H1 (cell line): ENCODE measurements at regions of chr6 and their contacts with region 1.

Region 1: GRCh38 chr6:44662461-44663121 is 275.1 kb downstream of the CDC5L start:
- DNase-seq: peak; percentile 64 to 85
- H3K4me3 ChIP-seq: no peak overlapping the region
- H3K27ac ChIP-seq: peak overlapping the region; percentile 63; the same call in 1 of the 2 replicates
- H3K4me1 ChIP-seq: peaks cover 9 to 30% (median 24%) of the 10 kb centered on the region in 4 experiments
- H3K27me3 ChIP-seq: no peaks in the 10 kb centered on the region; a peak in 2 of 7 replicates
- CTCF ChIP-seq: no peak
- EP300 ChIP-seq: peak in 1 of 2 experiments; percentile 92; a peak in 1 of 3 replicates
- POLR2A ChIP-seq: no peak
- RAD21 ChIP-seq: peak; percentile 15 to 27

Region 2: DNA sequence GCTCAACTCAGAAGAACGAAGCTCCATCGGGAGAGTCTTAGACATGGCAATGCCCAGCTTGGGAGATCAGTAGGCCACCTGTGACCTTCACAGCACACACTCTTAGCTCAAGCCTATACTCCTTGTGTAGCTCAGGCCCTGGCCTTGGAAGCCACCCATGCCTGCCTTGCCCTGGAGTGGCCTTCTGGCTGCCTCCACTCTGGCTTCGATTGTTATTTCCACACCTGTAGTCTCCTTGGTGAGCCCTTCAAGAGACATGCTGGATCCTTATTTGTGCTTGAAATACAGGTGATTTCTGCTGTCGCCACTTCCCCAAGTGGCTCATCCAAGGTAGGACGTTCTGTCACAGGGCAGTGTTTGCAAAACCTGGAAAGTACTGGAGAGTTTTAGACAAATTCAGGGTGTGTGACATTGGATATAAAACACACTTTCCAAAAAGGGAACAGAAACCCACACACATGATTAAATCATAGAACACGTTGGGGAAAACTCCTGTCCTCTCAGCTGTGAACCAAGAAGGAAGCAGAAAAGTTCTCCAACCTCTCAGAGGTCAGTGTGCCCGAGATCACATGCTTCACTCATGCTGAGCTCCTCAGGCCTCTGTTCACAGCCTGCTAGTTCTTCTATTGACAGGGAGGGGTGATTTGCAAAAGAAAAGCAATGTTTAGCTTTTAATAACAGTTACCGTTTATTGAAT is 116.7 kb after region 1 on chr6:
- CTCF ChIA-PET with region 1: interaction called, 21 read pairs
- POLR2A ChIA-PET with region 1: no interaction called
- DNase-seq: no peak
- H3K4me3 ChIP-seq: no peak overlapping the region
- H3K27ac ChIP-seq: no peak overlapping the region
- H3K4me1 ChIP-seq: no peaks in the 10 kb centered on the region
- H3K27me3 ChIP-seq: no peaks in the 10 kb centered on the region
- CTCF ChIP-seq: no peak
- EP300 ChIP-seq: no peak
- POLR2A ChIP-seq: no peak
- RAD21 ChIP-seq: no peak